ENCODE measurements at regions of chr7 and their contacts with region 1.

Region 1: DNA sequence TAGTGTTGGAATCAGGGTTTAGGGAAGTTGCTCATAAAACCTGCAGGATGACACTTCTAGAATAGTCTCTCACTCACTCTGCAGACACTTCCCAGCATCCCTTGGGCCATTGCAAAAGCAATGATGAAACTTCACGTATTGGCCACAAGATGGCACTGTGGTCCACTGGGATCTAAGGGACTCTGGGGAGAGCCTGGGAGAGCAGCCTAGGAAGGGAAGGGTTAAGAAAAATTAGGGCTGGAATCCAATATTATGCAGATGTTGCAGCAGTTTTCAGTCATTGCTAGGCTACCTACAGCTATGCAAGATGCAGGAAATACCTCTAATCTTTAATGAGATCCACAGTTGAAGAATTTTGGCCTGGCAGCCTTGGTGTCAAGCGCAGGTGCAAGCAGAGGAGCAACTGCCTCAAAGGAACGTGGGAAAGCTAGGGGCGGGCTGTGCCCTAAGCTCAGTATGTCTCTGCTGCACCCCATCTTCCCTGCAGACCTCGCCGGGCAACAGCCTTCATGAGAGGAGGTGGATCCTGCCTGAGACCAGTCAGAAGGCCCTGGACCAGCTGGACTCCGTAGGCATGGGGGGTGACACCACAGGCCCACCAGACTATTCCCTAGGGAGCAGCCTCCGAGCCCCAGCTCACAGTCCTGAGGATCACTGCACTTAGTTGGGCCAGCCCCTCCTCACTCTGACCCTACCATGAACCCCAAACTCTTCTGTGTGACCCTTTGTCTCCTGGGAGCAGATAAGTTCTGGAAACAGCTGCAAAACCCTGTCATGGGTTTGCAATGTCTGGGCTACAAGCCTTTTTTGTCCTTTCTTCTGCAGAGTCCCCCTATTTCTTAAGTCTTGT is 127.9 kb upstream of the PRSS58 start:
- DNase-seq: peak; percentile 57
- H3K4me3 Mint-ChIP-seq: no peak overlapping the region
- H3K27ac Mint-ChIP-seq: no peak overlapping the region
- H3K4me1 Mint-ChIP-seq: peaks cover 17% of the 10 kb centered on the region
- H3K27me3 Mint-ChIP-seq: peaks cover 33% of the 10 kb centered on the region
- CTCF ChIP-seq: peak; percentile 43

Region 2: DNA sequence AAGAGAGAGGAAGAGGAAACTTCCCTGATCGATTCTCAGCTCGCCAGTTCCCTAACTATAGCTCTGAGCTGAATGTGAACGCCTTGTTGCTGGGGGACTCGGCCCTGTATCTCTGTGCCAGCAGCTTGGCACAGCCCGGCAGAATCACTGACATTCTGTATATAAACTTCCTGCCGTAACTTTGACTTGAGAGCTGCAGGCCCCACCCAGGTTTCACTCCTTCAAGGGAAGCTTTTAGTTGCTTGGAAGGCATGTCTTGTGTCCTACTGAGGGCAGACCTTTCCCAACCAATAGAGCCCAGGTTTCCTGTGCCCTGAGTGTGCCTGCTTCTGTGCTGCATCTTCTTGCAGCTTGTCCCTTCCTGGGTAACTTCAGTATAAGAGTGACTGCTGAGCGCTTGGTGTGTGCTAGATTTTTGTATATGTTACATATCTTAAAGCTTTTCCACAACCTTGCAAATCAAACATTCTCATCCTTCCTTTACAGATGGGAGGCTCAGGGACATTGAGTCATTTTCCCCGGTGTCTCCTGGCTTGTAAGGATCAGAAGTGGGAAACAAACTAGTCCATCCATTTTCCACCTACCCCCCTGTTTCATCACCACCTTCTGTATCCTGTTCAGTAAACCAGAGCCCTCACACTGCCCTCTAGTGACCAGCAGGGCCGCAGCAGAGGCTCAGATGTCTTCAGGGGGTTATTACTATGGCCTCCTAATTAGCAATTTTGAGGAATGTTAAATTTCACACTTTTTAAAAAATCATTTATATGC is 97.4 kb after region 1 on chr7:
- CTCF ChIA-PET with region 1: no interaction called
- intact Hi-C with region 1: loop called (anchors 2 kb)
- DNase-seq: peak; percentile 72
- H3K4me3 Mint-ChIP-seq: no peak overlapping the region
- H3K27ac Mint-ChIP-seq: no peak overlapping the region
- H3K4me1 Mint-ChIP-seq: peaks cover 6% of the 10 kb centered on the region
- H3K27me3 Mint-ChIP-seq: peaks cover 56% of the 10 kb centered on the region
- CTCF ChIP-seq: peak; percentile 55